ENCODE measurements at regions of chr1 and their contacts with region 1.

Region 1: GRCh38 chr1:186595969-186596368 is 84.3 kb downstream of the PTGS2 start:
- DNase-seq: no peak
- ATAC-seq: no peak
- H3K4me3 ChIP-seq: no peak overlapping the region
- H3K27ac ChIP-seq: no peak overlapping the region
- H3K4me1 ChIP-seq: no peaks in the 10 kb centered on the region
- H3K27me3 ChIP-seq: no peaks in the 10 kb centered on the region
- CTCF ChIP-seq: no peak
- EP300 ChIP-seq: no peak
- POLR2A ChIP-seq: no peak
- RAD21 ChIP-seq: no peak

Region 2: DNA sequence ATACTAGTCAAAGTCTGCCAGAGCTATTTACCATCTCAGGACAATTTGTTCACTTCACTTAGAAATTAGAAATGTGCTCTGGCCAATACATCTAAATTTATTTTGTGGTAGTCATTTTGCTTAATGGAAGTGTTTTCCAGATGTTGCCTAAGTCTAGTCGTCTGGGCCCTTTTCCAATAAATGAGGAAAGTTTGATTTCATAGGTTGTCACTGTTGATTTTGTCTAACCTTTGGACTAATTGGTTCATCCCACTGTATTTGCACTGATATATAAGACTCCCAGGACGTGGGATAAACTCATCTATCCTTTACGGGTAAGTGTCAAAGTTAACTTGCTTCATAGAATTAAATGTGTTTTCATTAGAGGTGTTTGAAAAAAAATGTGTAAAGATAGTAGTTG is 300.0 kb before region 1 on chr1:
- CTCF ChIA-PET with region 1: no interaction called
- POLR2A ChIA-PET with region 1: no interaction called
- in situ Hi-C with region 1: no loop called
- intact Hi-C with region 1: no loop called
- DNase-seq: no peak
- ATAC-seq: no peak
- H3K4me3 ChIP-seq: no peak within 1 kb of the TSS
- H3K27ac ChIP-seq: no peak within 1 kb of the TSS
- H3K4me1 ChIP-seq: no peaks in the 10 kb centered on the region; a peak in 1 of 5 replicates
- H3K27me3 ChIP-seq: peaks cover 6% of the 10 kb centered on the region in 2 experiments; a peak in 3 of 5 replicates
- CTCF ChIP-seq: no peak
- EP300 ChIP-seq: no peak
- POLR2A ChIP-seq: no peak
- RAD21 ChIP-seq: no peak

Region 3: DNA sequence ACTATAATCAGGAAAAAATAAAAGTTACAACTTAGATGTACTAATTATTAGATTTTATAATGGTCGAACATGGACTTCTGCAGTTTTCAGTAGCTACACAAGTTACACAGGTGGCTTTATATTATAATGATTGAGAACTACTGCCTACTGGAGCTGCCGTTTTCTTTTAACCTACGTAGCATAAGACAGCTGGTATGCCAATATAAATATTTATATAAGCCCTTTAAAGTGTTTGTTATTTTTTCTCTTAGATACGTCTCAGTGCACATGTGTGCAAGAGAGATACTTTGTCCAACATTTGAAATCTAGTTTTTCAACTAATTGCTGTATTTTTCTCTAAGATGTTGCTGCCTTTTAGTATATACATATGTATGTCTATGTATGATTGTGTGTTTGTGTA is 177.5 kb before region 1 on chr1:
- CTCF ChIA-PET with region 1: no interaction called
- POLR2A ChIA-PET with region 1: no interaction called
- in situ Hi-C with region 1: loop called (anchors 10 kb)
- intact Hi-C with region 1: no loop called
- DNase-seq: no peak
- ATAC-seq: no peak
- H3K4me3 ChIP-seq: no peak overlapping the region
- H3K27ac ChIP-seq: no peak overlapping the region
- H3K4me1 ChIP-seq: no peaks in the 10 kb centered on the region
- H3K27me3 ChIP-seq: no peaks in the 10 kb centered on the region
- CTCF ChIP-seq: no peak
- EP300 ChIP-seq: no peak
- POLR2A ChIP-seq: no peak
- RAD21 ChIP-seq: no peak

Region 4: GRCh38 chr1:186535388-186536133 is 60.4 kb before region 1 on chr1:
- CTCF ChIA-PET with region 1: no interaction called
- POLR2A ChIA-PET with region 1: no interaction called
- in situ Hi-C with region 1: no loop called
- intact Hi-C with region 1: no loop called
- DNase-seq: no peak
- ATAC-seq: no peak
- H3K4me3 ChIP-seq: no peak overlapping the region
- H3K27ac ChIP-seq: no peak overlapping the region
- H3K4me1 ChIP-seq: no peaks in the 10 kb centered on the region
- H3K27me3 ChIP-seq: no peaks in the 10 kb centered on the region
- CTCF ChIP-seq: no peak
- EP300 ChIP-seq: no peak
- POLR2A ChIP-seq: no peak
- RAD21 ChIP-seq: no peak

Region 5: GRCh38 chr1:186915555-186915954 is 319.6 kb after region 1 on chr1:
- CTCF ChIA-PET with region 1: no interaction called
- POLR2A ChIA-PET with region 1: no interaction called
- in situ Hi-C with region 1: no loop called
- intact Hi-C with region 1: no loop called
- DNase-seq: no peak
- ATAC-seq: no peak
- H3K4me3 ChIP-seq: no peak overlapping the region
- H3K27ac ChIP-seq: no peak overlapping the region
- H3K4me1 ChIP-seq: no peaks in the 10 kb centered on the region
- H3K27me3 ChIP-seq: no peaks in the 10 kb centered on the region
- CTCF ChIP-seq: no peak
- EP300 ChIP-seq: no peak
- POLR2A ChIP-seq: no peak
- RAD21 ChIP-seq: no peak; a peak in 1 of 4 replicates

Region 6: DNA sequence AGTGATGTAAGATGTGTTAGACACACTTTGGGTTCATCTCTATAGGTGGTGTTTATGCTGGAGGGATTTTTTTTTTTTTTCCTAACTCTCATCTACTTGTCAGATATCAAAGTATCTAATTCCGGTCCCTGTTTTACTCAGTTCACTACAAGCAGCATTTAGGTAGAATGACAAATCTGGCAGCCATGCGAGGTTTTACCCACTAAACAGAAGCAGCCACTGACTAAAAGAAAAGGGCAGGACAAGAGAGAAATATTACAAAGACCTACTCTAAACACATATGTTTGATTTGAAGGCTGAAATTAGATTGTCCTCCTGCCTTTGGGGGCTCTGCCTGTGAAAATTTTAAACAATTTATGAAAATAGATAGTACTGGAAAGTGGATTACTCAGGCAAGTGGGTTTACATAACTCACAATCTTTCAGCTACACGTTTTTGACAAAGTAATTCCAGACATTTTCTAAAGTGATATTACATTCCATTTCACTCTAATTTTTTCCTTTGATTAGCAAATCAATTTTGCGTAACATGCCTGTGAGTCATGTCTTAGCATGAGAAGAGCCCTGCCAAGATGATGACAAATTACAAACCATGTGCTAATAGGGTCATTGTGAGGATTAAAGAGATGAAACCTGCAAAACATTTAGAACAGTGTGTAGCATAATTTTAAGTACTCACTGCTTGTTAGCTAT is 405.4 kb after region 1 on chr1:
- CTCF ChIA-PET with region 1: no interaction called
- POLR2A ChIA-PET with region 1: no interaction called
- in situ Hi-C with region 1: no loop called
- intact Hi-C with region 1: no loop called
- DNase-seq: no peak
- ATAC-seq: no peak
- H3K4me3 ChIP-seq: no peak overlapping the region
- H3K27ac ChIP-seq: no peak overlapping the region
- H3K4me1 ChIP-seq: no peaks in the 10 kb centered on the region
- H3K27me3 ChIP-seq: no peaks in the 10 kb centered on the region
- CTCF ChIP-seq: no peak
- EP300 ChIP-seq: no peak
- POLR2A ChIP-seq: no peak
- RAD21 ChIP-seq: no peak

Measured in K562 (cell line).